ENCODE measurements at regions of chr1 and their contacts with region 1.

Region 1: DNA sequence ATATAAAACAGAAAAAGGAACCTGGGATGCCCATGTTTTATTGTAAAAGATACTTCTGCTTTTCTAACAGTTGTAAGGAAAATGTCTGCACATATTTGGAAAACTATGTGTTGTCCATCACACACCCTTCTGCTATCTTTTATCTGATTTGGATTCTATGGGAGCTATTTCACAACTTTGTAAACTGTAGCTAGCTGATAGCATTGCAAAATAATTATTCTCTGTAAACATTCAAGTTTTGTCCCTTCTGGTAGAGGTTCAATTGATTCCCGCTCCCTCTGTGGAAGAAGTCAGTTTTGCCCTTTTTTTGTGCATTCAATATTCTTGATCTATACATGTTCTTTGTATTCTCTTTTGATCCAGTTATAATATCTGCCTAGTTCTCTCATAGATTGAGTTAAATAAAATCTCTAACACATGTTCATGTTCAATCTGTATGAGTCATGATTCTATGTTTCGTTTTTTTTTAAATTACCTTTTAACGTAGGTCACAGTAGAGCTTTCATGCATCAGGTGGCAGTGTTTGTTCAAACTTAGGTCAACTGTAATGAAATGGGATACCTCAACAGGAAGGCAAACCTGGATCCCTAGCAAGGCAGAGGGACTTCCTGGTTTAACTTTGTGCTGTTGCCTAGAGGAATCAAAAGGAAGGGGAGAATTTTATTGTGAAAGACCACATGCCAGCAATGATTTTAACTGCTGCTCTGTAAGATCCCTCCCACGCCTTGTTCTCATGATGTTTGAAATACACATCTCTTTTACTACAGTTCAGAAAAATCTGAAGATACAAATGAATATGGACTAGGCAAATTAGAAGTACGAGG is 26.0 kb upstream of the BCL9 start:
- DNase-seq: no peak
- H3K4me3 Mint-ChIP-seq: no peak overlapping the region
- H3K27ac Mint-ChIP-seq: no peak overlapping the region
- H3K4me1 Mint-ChIP-seq: peaks cover 8% of the 10 kb centered on the region
- H3K27me3 Mint-ChIP-seq: peaks cover 16% of the 10 kb centered on the region

Region 2: DNA sequence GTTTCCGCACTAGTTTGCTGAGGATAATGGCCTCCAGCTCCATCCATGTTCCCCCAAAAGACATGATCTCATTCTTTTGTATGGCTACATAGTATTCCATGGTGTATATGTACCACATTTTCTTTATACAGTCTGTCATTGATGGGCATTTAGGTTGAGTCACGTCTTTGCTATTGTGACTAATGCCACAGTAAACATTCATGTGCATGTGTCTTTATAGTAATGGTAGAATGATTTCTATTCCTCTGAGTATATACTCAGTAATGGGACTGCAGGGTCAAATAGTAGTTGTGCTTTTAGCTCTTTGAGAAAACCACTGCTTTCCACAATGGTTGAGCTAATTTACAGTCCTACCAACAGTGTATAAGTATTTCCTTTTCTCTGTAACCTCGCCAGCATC is 52.2 kb before region 1 on chr1:
- intact Hi-C with region 1: no loop called
- DNase-seq: no peak
- H3K4me3 Mint-ChIP-seq: no peak overlapping the region
- H3K27ac Mint-ChIP-seq: no peak overlapping the region
- H3K4me1 Mint-ChIP-seq: no peaks in the 10 kb centered on the region
- H3K27me3 Mint-ChIP-seq: peaks cover 23% of the 10 kb centered on the region

Region 3: GRCh38 chr1:147494998-147495580 is 20.2 kb before region 1 on chr1:
- intact Hi-C with region 1: no loop called
- DNase-seq: peak; percentile 57
- H3K4me3 Mint-ChIP-seq: no peak overlapping the region
- H3K27ac Mint-ChIP-seq: no peak overlapping the region
- H3K4me1 Mint-ChIP-seq: no peaks in the 10 kb centered on the region
- H3K27me3 Mint-ChIP-seq: peaks cover 11% of the 10 kb centered on the region

Region 4: DNA sequence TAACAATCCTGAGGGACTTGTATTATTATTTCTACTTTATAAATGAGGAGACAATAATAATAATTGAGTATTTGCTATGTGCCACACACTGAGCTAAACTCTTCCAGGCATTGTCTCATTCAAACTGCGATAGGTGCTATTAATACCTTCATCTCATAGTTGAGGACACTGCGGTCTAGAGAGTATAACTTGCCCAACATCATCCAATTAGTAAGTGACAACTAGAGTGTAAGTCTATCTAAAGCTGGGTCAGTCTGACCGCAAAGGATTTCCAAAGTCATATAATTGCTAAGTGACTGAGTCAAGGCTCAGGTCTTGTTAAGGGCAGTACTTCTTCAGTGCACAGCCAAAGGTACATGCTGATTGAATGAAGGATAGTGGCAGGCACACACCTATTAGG is 35.8 kb after region 1 on chr1:
- intact Hi-C with region 1: no loop called
- DNase-seq: no peak
- H3K4me3 Mint-ChIP-seq: no peak overlapping the region
- H3K27ac Mint-ChIP-seq: no peak overlapping the region
- H3K4me1 Mint-ChIP-seq: peaks cover 22% of the 10 kb centered on the region
- H3K27me3 Mint-ChIP-seq: no peaks in the 10 kb centered on the region

Region 5: DNA sequence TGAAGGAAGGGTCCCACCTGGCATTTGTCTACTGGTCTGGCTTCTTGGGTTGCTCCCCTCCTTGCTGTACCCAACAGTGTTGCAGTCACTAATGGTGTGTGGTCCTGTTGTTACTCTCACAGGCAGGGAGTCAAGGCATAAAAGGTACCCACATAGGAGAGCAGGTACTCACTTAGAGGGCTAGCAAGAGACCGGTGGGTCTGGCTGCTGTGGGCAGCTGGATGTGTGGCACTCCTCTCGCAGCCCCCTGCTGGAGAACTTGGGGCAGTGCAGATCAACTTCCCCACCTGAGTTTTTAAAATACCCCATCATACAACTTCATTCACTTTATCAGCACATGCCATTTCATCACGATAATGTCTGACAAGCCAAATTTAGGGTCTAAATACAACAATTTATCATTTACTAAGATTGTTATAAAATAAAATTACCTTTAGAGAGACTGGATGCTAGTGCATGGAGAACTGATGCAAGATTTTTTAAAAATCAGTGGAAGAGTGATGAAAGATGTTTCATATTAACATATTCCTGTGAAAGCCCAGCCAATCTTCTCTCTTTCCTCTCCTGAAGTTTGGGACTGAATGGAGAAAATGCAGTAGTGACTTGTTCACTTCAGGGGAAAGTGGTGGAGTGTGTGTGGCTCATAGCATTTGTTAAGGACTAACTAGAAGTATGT is 112.3 kb after region 1 on chr1:
- intact Hi-C with region 1: loop called (anchors 5 kb)
- DNase-seq: peak; percentile 37
- H3K4me3 Mint-ChIP-seq: no peak overlapping the region
- H3K27ac Mint-ChIP-seq: no peak overlapping the region
- H3K4me1 Mint-ChIP-seq: peaks cover 30% of the 10 kb centered on the region
- H3K27me3 Mint-ChIP-seq: no peaks in the 10 kb centered on the region